Transverse colon (tissue), 4 donors: ENCODE measurements at regions of chr12 and their contacts with region 1.

Region 1: GRCh38 chr12:20601668-20602280 is 93.4 kb upstream of the SLCO1C1 start:
- DNase-seq: no peak
- H3K4me3 ChIP-seq: no peak overlapping the region
- H3K27ac ChIP-seq: peak overlapping the region; percentile 42 to 68 (median 54)
- H3K4me1 ChIP-seq: peaks cover 3 to 14% (median 8%) of the 10 kb centered on the region in 4 donors
- H3K27me3 ChIP-seq: no peaks in the 10 kb centered on the region
- CTCF ChIP-seq: peak; percentile 10 to 50 (median 40)
- EP300 ChIP-seq: no peak
- POLR2A ChIP-seq: no peak

Region 2: GRCh38 chr12:19757317-19757877 is 844.4 kb before region 1 on chr12:
- in situ Hi-C with region 1: loop called in 1 of 4 experiments (anchors 25 kb)
- intact Hi-C with region 1: no loop called
- DNase-seq: no peak
- H3K4me3 ChIP-seq: no peak overlapping the region
- H3K27ac ChIP-seq: no peak overlapping the region
- H3K4me1 ChIP-seq: no peaks in the 10 kb centered on the region
- H3K27me3 ChIP-seq: no peaks in the 10 kb centered on the region
- CTCF ChIP-seq: peak; percentile 51 to 70 (median 64)
- EP300 ChIP-seq: no peak
- POLR2A ChIP-seq: no peak

Region 3: GRCh38 chr12:19847294-19848059 is 754.3 kb before region 1 on chr12:
- in situ Hi-C with region 1: no loop called
- intact Hi-C with region 1: loop called (anchors 5 kb)
- DNase-seq: no peak
- H3K4me3 ChIP-seq: no peak overlapping the region
- H3K27ac ChIP-seq: peak overlapping the region; percentile 46 to 69 (median 64)
- H3K4me1 ChIP-seq: peaks cover 0 to 8% (median 0%) of the 10 kb centered on the region in 4 donors
- H3K27me3 ChIP-seq: no peaks in the 10 kb centered on the region
- CTCF ChIP-seq: no peak
- EP300 ChIP-seq: no peak
- POLR2A ChIP-seq: no peak

Region 4: DNA sequence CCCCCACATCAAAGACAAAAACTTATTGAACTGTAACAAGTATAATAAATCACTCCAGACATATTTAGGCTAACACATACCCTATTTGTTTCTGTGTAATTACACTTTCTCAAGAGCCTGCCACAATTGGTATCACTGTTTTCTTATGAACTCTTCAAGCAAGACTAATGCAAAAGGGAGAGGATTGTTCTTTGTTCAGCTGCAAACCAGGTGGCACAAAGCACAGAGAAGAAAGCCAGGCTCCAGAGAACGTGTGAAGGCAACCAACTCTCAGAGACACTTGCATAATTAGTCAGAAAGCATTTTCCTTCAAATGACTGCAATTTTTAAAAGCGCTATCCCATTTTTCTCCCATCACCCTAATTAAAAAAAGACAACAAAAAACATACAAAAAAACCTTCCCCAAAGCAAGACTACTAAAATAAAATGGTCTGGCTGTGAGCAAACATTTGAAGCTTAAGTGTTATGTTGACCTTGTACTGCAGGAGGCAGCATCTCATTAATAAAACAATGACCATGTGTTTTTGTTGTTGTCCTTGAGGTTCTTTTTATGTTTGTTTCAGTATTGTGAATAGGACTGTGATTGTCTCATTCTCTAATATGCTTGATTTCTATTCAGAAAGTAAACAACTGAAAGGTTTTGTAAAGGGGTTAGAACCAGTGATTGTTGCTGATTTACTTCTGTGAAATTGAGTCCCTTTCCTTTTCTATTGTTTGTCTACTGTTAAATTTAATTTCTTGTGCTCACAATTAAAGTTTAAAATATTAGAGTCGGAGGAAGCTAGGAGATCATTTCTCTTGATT is 686.2 kb before region 1 on chr12:
- in situ Hi-C with region 1: loop called in 1 of 4 experiments (anchors 25 kb)
- intact Hi-C with region 1: no loop called
- DNase-seq: no peak
- H3K4me3 ChIP-seq: no peak overlapping the region
- H3K27ac ChIP-seq: no peak overlapping the region
- H3K4me1 ChIP-seq: peaks cover 3 to 13% (median 11%) of the 10 kb centered on the region in 4 donors
- H3K27me3 ChIP-seq: no peaks in the 10 kb centered on the region
- CTCF ChIP-seq: peak; percentile 41 to 75 (median 62)
- EP300 ChIP-seq: no peak
- POLR2A ChIP-seq: no peak

Region 5: GRCh38 chr12:20369305-20370005 is 232.3 kb before region 1 on chr12:
- in situ Hi-C with region 1: no loop called
- intact Hi-C with region 1: loop called (anchors 1 kb)
- DNase-seq: peak; percentile 84
- H3K4me3 ChIP-seq: peak overlapping the region; percentile 71 to 92 (median 83)
- H3K27ac ChIP-seq: peak overlapping the region; percentile 89 to 97 (median 94)
- H3K4me1 ChIP-seq: peaks cover 0 to 28% (median 3%) of the 10 kb centered on the region in 4 donors
- H3K27me3 ChIP-seq: peaks cover 11% of the 10 kb centered on the region
- CTCF ChIP-seq: peak; percentile 21 to 58 (median 28)
- EP300 ChIP-seq: no peak
- POLR2A ChIP-seq: peak; percentile 88

Region 6: DNA sequence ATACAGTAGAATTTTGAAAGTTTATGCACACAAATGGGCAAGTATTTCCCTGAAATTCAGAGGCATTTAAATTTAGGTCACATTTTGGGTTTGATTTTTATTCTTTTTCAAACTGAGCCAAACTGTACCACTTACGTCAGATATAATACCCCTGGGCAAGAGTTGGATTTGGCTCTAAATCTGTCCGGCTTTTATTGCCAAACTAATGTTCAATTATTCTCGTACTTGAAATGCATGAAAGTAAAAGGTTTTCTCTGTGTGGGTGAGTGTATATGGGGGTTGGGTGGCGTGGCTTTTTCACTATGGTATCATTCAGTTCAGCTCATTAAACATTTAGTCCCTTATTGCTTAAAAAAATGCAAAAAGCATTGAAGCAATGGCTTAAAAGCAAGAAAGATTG is 149.3 kb after region 1 on chr12:
- in situ Hi-C with region 1: no loop called
- intact Hi-C with region 1: no loop called
- DNase-seq: no peak
- H3K4me3 ChIP-seq: no peak overlapping the region
- H3K27ac ChIP-seq: no peak overlapping the region
- H3K4me1 ChIP-seq: no peaks in the 10 kb centered on the region
- H3K27me3 ChIP-seq: no peaks in the 10 kb centered on the region
- CTCF ChIP-seq: no peak
- EP300 ChIP-seq: no peak
- POLR2A ChIP-seq: no peak